H1 (cell line): ENCODE measurements at regions of chr4 and their contacts with region 1.

Region 1: GRCh38 chr4:73419106-73420038 is 15.3 kb downstream of the ALB start:
- DNase-seq: no peak
- H3K4me3 ChIP-seq: no peak overlapping the region
- H3K27ac ChIP-seq: no peak overlapping the region
- H3K4me1 ChIP-seq: peaks cover 0 to 4% (median 0%) of the 10 kb centered on the region in 4 experiments; a peak in 3 of 7 replicates
- H3K27me3 ChIP-seq: no peaks in the 10 kb centered on the region
- CTCF ChIP-seq: no peak
- EP300 ChIP-seq: no peak
- POLR2A ChIP-seq: no peak
- RAD21 ChIP-seq: no peak

Region 2: GRCh38 chr4:73341454-73341853 is 77.9 kb before region 1 on chr4:
- CTCF ChIA-PET with region 1: interaction called, 11 read pairs
- POLR2A ChIA-PET with region 1: no interaction called
- DNase-seq: peak in 1 of 2 experiments; percentile 53
- H3K4me3 ChIP-seq: no peak overlapping the region
- H3K27ac ChIP-seq: no peak overlapping the region
- H3K4me1 ChIP-seq: peaks cover 0 to 5% (median 1%) of the 10 kb centered on the region in 4 experiments; a peak in 4 of 7 replicates
- H3K27me3 ChIP-seq: no peaks in the 10 kb centered on the region
- CTCF ChIP-seq: peak in 2 of 3 experiments; percentile 90 to 95; a peak in 3 of 4 replicates
- EP300 ChIP-seq: no peak
- POLR2A ChIP-seq: no peak
- RAD21 ChIP-seq: peak; percentile 98 to 100

Region 3: GRCh38 chr4:73434311-73434710 is 14.9 kb after region 1 on chr4:
- CTCF ChIA-PET with region 1: interaction called, 20 read pairs
- POLR2A ChIA-PET with region 1: no interaction called
- DNase-seq: no peak
- H3K4me3 ChIP-seq: no peak overlapping the region
- H3K27ac ChIP-seq: no peak overlapping the region
- H3K4me1 ChIP-seq: no peaks in the 10 kb centered on the region
- H3K27me3 ChIP-seq: no peaks in the 10 kb centered on the region
- CTCF ChIP-seq: peak in 1 of 3 experiments; percentile 40; a peak in 2 of 4 replicates
- EP300 ChIP-seq: no peak
- POLR2A ChIP-seq: no peak
- RAD21 ChIP-seq: peak; percentile 23 to 25; a peak in 3 of 4 replicates

Region 4: DNA sequence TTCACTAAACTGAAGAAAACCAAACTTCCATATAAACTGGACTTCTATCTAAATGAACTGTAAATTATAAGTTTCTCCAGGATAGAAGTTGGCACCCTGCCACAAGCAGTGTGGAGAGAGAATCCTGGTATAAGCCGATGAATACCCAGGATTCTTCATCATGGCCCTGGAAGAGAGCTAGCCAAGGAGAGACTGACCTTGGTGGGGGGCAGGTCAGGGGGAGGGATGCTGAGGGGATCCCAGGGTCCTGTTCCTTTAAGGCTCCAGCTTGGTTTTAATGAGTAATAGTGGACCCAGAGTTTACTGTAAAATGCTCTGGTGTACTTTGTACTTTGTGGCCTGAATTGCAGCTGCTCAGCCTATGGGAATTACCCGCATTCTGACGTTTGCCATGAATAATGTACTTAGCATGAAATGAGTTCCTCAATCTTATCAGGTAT is 183.9 kb after region 1 on chr4:
- CTCF ChIA-PET with region 1: no interaction called
- POLR2A ChIA-PET with region 1: no interaction called
- DNase-seq: no peak
- H3K4me3 ChIP-seq: no peak overlapping the region
- H3K27ac ChIP-seq: no peak overlapping the region
- H3K4me1 ChIP-seq: peaks cover 0 to 6% (median 6%) of the 10 kb centered on the region in 4 experiments; a peak in 2 of 7 replicates
- H3K27me3 ChIP-seq: no peaks in the 10 kb centered on the region
- CTCF ChIP-seq: no peak
- EP300 ChIP-seq: no peak
- POLR2A ChIP-seq: no peak
- RAD21 ChIP-seq: no peak